ENCODE measurements at regions of chr16 and their contacts with region 1.

Region 1: DNA sequence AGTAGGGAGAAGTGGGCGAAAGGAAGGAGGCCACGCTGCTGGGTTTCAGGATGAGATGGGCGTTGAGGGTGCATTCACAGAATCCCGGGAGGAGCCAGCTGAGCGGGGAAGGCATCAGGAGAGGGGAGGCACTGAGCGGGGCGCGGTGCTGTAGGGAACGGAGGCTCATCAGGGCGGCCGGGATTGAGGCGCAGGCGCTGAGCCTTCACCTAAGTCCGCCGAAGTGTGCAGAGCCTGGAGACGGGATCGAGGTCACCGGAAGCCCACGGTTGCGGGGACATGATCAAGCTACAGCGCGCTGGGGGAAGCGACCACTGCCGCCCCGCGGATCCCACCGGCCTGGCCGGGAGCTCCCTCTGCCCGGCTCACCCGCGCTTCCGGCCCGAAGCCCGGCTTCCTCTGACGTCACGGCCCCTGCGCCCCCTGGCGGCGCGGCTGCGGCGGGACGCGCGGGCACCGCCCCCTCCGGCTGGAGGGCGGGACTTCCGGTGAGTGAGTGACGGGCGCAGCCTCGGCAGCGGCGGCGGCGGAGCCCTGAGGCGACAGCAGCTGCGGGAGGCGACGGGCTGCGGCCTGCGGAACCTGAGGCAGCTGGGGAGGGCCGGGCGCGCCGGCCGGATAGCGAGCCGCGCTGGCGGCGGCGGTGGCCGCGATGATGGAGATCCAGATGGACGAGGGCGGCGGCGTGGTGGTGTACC is at the start of gene MAPK8IP3:
- DNase-seq: peak; percentile 95
- H3K4me3 ChIP-seq: peak within 1 kb of the TSS; percentile 39 to 82 (median 60)
- H3K27ac ChIP-seq: peak within 1 kb of the TSS; percentile 72
- H3K4me1 ChIP-seq: peaks cover 12% of the 10 kb centered on the region
- H3K27me3 ChIP-seq: no peaks in the 10 kb centered on the region
- CTCF ChIP-seq: peak; percentile 73 to 100
- POLR2A ChIP-seq: peak; percentile 97
- total RNA-seq, gene MAPK8IP3: 92.2 and 95.0 TPM in 2 replicates

Region 2: GRCh38 chr16:1278477-1278876 is 427.4 kb before region 1 on chr16:
- CTCF ChIA-PET with region 1: no interaction called
- POLR2A ChIA-PET with region 1: no interaction called
- dilution Hi-C with region 1: no loop called
- intact Hi-C with region 1: no loop called
- DNase-seq: no peak
- H3K4me3 ChIP-seq: no peak overlapping the region
- H3K27ac ChIP-seq: no peak overlapping the region
- H3K4me1 ChIP-seq: no peaks in the 10 kb centered on the region
- H3K27me3 ChIP-seq: no peaks in the 10 kb centered on the region
- CTCF ChIP-seq: no peak
- POLR2A ChIP-seq: no peak

Region 3: GRCh38 chr16:1428511-1428910 is 277.3 kb before region 1 on chr16:
- CTCF ChIA-PET with region 1: no interaction called
- POLR2A ChIA-PET with region 1: no interaction called
- dilution Hi-C with region 1: no loop called
- intact Hi-C with region 1: loop called (anchors 10 kb)
- DNase-seq: peak; percentile 36
- H3K4me3 ChIP-seq: no peak overlapping the region
- H3K27ac ChIP-seq: no peak overlapping the region
- H3K4me1 ChIP-seq: no peaks in the 10 kb centered on the region
- H3K27me3 ChIP-seq: no peaks in the 10 kb centered on the region
- CTCF ChIP-seq: peak; percentile 59 to 70
- POLR2A ChIP-seq: no peak

Region 4: GRCh38 chr16:1610276-1611017 is 95.4 kb before region 1 on chr16:
- CTCF ChIA-PET with region 1: interaction called, 8 read pairs
- POLR2A ChIA-PET with region 1: interaction called, 3 read pairs
- dilution Hi-C with region 1: no loop called
- intact Hi-C with region 1: loop called (anchors 1 kb)
- DNase-seq: peak; percentile 91
- H3K4me3 ChIP-seq: peak overlapping the region; percentile 48 to 80 (median 61)
- H3K27ac ChIP-seq: peak overlapping the region; percentile 32
- H3K4me1 ChIP-seq: peaks cover 29% of the 10 kb centered on the region
- H3K27me3 ChIP-seq: no peaks in the 10 kb centered on the region
- CTCF ChIP-seq: no peak
- POLR2A ChIP-seq: no peak

Region 5: GRCh38 chr16:1691276-1691675 is 14.6 kb before region 1 on chr16:
- CTCF ChIA-PET with region 1: interaction called, 25 read pairs
- POLR2A ChIA-PET with region 1: no interaction called
- dilution Hi-C with region 1: no loop called
- intact Hi-C with region 1: no loop called
- DNase-seq: no peak
- H3K4me3 ChIP-seq: no peak overlapping the region
- H3K27ac ChIP-seq: no peak overlapping the region
- H3K4me1 ChIP-seq: peaks cover 14% of the 10 kb centered on the region
- H3K27me3 ChIP-seq: no peaks in the 10 kb centered on the region
- CTCF ChIP-seq: no peak
- POLR2A ChIP-seq: no peak